Breast epithelium (tissue), 4 donors: ENCODE measurements at regions of chr10 and their contacts with region 1.

Region 1: GRCh38 chr10:43524434-43525247 is 49.8 kb downstream of the ZNF239 start:
- DNase-seq: no peak
- H3K4me3 ChIP-seq: no peak overlapping the region
- H3K27ac ChIP-seq: no peak overlapping the region
- H3K4me1 ChIP-seq: no peaks in the 10 kb centered on the region
- H3K27me3 ChIP-seq: no peaks in the 10 kb centered on the region
- CTCF ChIP-seq: no peak
- POLR2A ChIP-seq: no peak

Region 2: GRCh38 chr10:43683451-43684291 is 159.0 kb after region 1 on chr10:
- intact Hi-C with region 1: no loop called
- DNase-seq: no peak
- H3K4me3 ChIP-seq: no peak overlapping the region
- H3K27ac ChIP-seq: no peak overlapping the region
- H3K4me1 ChIP-seq: no peaks in the 10 kb centered on the region
- H3K27me3 ChIP-seq: no peaks in the 10 kb centered on the region
- CTCF ChIP-seq: peak in 2 of 3 donors; percentile 8 to 24
- POLR2A ChIP-seq: no peak

Region 3: GRCh38 chr10:43867667-43868565 is 343.3 kb after region 1 on chr10:
- intact Hi-C with region 1: no loop called
- DNase-seq: no peak
- H3K4me3 ChIP-seq: no peak overlapping the region
- H3K27ac ChIP-seq: peak overlapping the region in 1 of 2 donors; percentile 27
- H3K4me1 ChIP-seq: peaks cover 2 to 9% of the 10 kb centered on the region in 2 donors
- H3K27me3 ChIP-seq: no peaks in the 10 kb centered on the region
- CTCF ChIP-seq: no peak
- POLR2A ChIP-seq: no peak

Region 4: DNA sequence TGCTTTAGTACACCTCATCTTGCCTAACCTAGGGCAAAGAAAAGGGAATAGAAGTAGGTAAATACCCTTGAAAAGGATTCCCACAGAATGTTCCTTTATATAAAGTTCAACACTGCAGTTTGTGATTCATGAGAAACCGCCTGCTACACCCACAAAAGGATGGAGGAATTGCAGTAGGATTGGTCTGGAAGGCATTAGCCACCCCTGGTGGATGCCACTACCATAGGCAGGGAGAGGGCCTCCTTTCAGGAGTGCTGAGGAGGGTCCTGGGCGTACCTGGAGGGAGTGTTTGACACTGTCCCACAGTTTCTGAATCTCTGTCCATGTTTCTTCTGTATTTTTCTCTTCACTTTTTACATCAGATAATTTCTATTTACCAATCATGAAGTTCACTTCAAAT is 1164.7 kb after region 1 on chr10:
- intact Hi-C with region 1: loop called (anchors 5 kb)
- DNase-seq: no peak
- H3K4me3 ChIP-seq: no peak overlapping the region
- H3K27ac ChIP-seq: no peak overlapping the region
- H3K4me1 ChIP-seq: no peaks in the 10 kb centered on the region
- H3K27me3 ChIP-seq: no peaks in the 10 kb centered on the region
- CTCF ChIP-seq: no peak
- POLR2A ChIP-seq: no peak